Right ventricle myocardium superior (tissue), 1 donor: ENCODE measurements at regions of chr1 and their contacts with region 1.

Region 1: DNA sequence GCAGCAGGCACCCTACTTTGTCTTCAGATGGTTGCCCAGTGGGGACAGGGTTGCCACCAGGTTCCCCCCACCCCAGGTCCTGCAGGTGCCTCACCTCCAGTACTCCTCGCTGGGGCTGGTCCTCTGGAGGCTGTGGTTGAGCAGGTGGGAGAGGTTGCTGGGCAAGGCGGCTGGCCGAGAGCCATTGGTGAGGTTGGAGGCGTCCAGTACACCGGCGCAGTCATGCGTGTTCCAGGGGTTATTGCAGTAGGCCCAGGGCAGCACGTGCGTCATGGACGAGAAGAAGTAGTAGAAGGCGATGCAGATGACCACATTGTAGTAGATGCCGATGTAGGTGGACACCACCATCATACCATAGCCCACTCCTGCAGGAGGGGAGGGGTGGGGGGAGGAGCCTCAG is 16.9 kb downstream of the CCDC24 start:
- DNase-seq: no peak
- ATAC-seq: no peak

Region 2: GRCh38 chr1:44049839-44050238 is 41.6 kb after region 1 on chr1:
- intact Hi-C with region 1: loop called (anchors 5 kb)
- DNase-seq: no peak
- ATAC-seq: no peak